ENCODE measurements at regions of chr17 and their contacts with region 1.

Region 1: GRCh38 chr17:48593840-48594537 is 410 bp upstream of the HOXB5 start:
- DNase-seq: peak; percentile 71 to 96
- H3K4me3 ChIP-seq: no peak overlapping the region
- CTCF ChIP-seq: peak in 1 of 3 donors; percentile 92
- POLR2A ChIP-seq: no peak

Region 2: GRCh38 chr17:48335858-48336500 is 258.0 kb before region 1 on chr17:
- intact Hi-C with region 1: loop called (anchors 5 kb)
- DNase-seq: no peak
- H3K4me3 ChIP-seq: no peak overlapping the region
- CTCF ChIP-seq: no peak
- POLR2A ChIP-seq: no peak

Region 3: DNA sequence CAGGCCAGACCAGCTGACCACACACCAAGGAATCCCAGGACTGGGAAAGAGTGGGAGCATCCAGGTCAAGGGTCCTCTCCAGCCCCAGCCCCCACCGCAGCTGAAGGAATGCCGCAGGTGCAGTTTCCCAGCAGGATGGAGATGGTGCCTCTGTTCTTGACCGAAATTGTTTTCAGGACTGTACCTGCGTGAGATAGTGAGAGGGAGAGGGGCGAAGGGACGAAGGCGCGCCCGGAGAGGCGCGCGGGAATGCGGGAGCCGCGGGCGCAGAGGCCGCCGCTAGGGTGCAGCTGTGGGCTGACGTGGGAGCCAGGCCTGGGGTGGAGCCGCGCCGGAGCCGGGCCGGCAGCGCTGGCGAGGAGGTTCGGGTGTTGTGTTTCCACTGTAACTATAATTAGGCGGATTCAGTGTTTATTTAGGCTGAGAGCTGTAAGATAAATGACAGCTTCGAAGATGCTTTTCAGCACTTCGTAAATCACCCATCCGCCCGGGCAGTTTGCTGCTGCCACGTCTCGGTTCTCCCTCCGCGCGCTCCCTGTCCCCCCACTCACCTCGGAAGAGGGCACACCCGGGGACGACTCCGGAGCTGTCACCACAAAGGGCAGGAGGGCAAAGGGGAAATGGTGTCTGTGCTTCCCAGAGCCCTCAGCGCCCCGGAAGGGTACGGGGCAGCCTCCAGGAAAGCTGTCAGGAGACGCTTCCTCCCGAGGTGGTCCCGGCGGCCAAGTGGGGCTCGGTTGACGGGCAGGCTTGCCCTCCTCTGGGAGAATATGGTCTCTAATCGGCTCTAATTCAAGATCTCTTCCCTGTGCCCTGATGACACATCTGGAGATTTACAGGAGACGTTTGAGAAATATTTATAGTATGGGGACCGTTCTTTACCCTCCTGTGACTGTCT is 101.3 kb before region 1 on chr17:
- intact Hi-C with region 1: loop called (anchors 5 kb)
- DNase-seq: peak; percentile 48 to 94
- H3K4me3 ChIP-seq: no peak overlapping the region
- CTCF ChIP-seq: peak in 1 of 3 donors; percentile 27
- POLR2A ChIP-seq: no peak